GM12878 (cell line): ENCODE measurements at regions of chr15 and their contacts with region 1.

Region 1: GRCh38 chr15:39887832-39888231 is 32.2 kb downstream of the GPR176 start:
- DNase-seq: no peak
- ATAC-seq: peak; percentile 75
- H3K4me3 ChIP-seq: no peak overlapping the region
- H3K27ac ChIP-seq: no peak overlapping the region
- H3K4me1 ChIP-seq: no peaks in the 10 kb centered on the region
- H3K27me3 ChIP-seq: no peaks in the 10 kb centered on the region; a peak in 1 of 4 replicates
- CTCF ChIP-seq: peak; percentile 20 to 55 (median 35); a peak in 4 of 6 replicates
- EP300 ChIP-seq: no peak
- POLR2A ChIP-seq: no peak
- RAD21 ChIP-seq: peak; percentile 26; the same call in 1 of the 2 replicates

Region 2: DNA sequence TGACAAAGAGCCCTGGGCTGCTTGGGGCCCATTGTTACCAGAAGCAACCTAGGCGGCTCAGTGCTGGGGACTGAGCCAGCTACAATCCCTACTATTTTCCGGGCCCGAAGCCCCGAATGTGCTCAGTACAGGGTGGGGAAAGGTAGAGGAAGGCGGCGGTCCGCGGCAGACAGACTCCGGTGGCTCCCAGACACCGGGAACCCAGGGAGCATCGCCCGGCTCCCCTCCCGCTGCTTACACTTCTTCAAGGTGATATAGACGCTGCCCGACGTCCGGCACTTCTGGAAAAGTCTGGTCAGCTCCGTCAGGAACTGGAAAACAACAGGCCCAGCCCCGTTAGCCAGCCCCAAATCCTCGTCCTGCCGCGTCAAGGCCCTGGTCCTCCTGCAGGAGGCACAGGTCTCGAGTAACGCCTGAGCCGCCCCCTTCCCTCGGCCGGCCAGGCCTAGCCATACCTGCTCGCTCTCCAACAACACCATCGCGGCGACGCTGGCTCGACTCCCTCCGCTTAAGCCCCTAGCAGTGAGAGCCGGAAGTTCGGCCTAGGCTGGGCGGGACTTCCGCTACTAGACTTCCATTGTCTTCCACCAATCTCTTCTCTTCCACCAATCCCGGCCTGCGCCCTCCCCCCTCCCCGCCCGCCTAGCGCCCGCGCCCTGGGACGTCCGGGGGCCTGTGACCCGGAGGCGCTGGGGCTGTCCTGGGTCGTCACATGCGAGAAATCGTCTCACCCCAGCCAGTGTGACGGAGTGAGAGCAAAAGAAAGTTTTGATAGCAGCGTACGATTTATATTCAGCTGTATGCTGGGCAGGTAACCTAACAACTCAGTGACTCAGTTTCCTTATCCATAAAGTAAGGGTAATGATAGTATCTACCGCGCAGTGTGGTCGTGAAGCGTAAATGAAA is 151.1 kb after region 1 on chr15 and contains the start of gene SRP14:
- CTCF ChIA-PET with region 1: interaction called, 18 read pairs
- POLR2A ChIA-PET with region 1: no interaction called
- RAD21 ChIA-PET with region 1: no interaction called
- SMC1A ChIA-PET with region 1: interaction called, 4 read pairs
- in situ Hi-C with region 1: no loop called
- intact Hi-C with region 1: no loop called
- DNase-seq: peak; percentile 75
- ATAC-seq: peak; percentile 95
- H3K4me3 ChIP-seq: peak within 1 kb of the TSS; percentile 89
- H3K27ac ChIP-seq: peak within 1 kb of the TSS; percentile 79
- H3K4me1 ChIP-seq: peaks cover 9% of the 10 kb centered on the region
- H3K27me3 ChIP-seq: no peaks in the 10 kb centered on the region
- CTCF ChIP-seq: 0 out of 6 replicates have a peak, but pooled peaks of 1 of the 3 experiments have one; percentile 1
- EP300 ChIP-seq: 0 out of 4 replicates have a peak, but pooled peaks of 1 of the 2 experiments have one; percentile 3
- POLR2A ChIP-seq: peak; percentile 98
- RAD21 ChIP-seq: no peak
- polyA plus RNA-seq, gene SRP14: 1,041 to 1,182 TPM